ENCODE measurements at regions of chr17 and their contacts with region 1.

Region 1: DNA sequence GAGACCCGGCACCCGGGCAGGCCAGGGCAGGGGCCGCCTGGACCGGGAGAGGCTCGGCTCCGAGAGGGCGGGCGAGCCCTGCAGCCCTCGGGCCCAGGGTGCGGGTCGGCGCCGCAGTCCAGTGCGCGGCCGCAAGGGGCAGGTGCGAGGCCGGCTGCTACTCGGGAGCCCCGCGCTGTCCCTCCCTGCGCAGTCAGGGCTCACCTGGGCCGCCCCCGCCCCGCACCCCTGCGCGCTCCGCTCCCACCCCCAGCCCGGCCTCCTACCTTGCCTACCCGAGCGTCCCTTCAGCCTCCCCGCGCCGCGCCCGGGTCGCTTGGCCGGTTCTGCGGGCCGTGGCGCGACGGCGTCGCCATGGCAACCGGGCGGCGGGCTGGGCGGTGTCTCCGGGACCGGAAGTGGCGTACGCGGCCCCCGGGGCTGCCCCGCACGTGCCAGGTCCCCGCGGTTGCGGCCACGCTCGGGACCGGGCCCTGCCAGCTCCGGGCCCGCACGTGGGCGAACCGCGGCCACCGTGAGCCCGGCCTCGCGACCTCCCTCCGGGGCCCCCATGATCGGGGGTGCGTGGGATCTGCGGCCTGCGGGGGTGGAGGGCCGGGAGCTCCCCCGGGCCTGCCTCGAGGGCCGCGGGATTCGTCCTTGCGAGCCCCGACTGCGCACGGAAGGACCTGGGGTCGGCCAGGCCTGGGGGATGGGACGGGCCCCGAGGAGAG is at the start of gene CYB561:
- DNase-seq: peak; percentile 35 to 47
- ATAC-seq: peak; percentile 67 to 75
- H3K4me3 ChIP-seq: peak within 1 kb of the TSS; percentile 62 to 77 (median 72)
- H3K27ac ChIP-seq: peak within 1 kb of the TSS; percentile 68 to 83 (median 78)
- H3K4me1 ChIP-seq: peaks cover 19 to 25% of the 10 kb centered on the region in 2 donors
- H3K27me3 ChIP-seq: peaks cover 0 to 6% (median 2%) of the 10 kb centered on the region in 3 donors
- CTCF ChIP-seq: peak in 4 of 5 experiments; percentile 43 to 61 (median 53)
- POLR2A ChIP-seq: peak; percentile 33 to 35
- total RNA-seq, gene CYB561: 2.2 to 6.5 (median 3.9) TPM

Region 2: GRCh38 chr17:63275318-63275970 is 170.7 kb before region 1 on chr17:
- in situ Hi-C with region 1: no loop called
- intact Hi-C with region 1: no loop called
- DNase-seq: no peak
- ATAC-seq: no peak
- H3K4me3 ChIP-seq: no peak overlapping the region
- H3K27ac ChIP-seq: no peak overlapping the region
- H3K4me1 ChIP-seq: no peaks in the 10 kb centered on the region
- H3K27me3 ChIP-seq: no peaks in the 10 kb centered on the region
- CTCF ChIP-seq: no peak
- POLR2A ChIP-seq: no peak

Region 3: GRCh38 chr17:63356337-63356757 is 89.8 kb before region 1 on chr17:
- in situ Hi-C with region 1: loop called in 1 of 4 experiments (anchors 25 kb)
- intact Hi-C with region 1: no loop called
- DNase-seq: no peak
- ATAC-seq: peak; percentile 62 to 76
- H3K4me3 ChIP-seq: no peak overlapping the region
- H3K27ac ChIP-seq: no peak overlapping the region
- H3K4me1 ChIP-seq: no peaks in the 10 kb centered on the region
- H3K27me3 ChIP-seq: no peaks in the 10 kb centered on the region
- CTCF ChIP-seq: no peak
- POLR2A ChIP-seq: no peak

Region 4: DNA sequence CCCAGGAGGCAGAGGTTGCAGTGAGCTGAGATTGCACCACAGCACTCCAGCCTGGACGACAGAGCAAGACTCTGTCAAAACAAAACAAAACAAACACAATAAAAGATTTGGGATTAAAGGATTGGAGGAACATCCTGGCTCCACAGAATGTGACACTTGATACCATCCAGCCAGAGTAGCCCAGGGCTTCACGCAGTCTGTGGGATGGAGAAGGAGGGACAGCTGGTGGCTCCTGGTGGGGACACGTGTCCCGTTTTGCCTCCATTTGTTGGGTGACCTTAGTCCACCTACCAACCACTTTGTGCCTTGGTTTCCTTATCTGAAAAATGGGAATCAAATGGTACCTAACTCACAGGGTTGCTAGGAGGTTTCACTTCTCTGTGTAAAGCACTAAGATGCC is 12.3 kb after region 1 on chr17:
- in situ Hi-C with region 1: no loop called
- intact Hi-C with region 1: no loop called
- DNase-seq: no peak
- ATAC-seq: no peak
- H3K4me3 ChIP-seq: no peak overlapping the region
- H3K27ac ChIP-seq: no peak overlapping the region
- H3K4me1 ChIP-seq: no peaks in the 10 kb centered on the region
- H3K27me3 ChIP-seq: no peaks in the 10 kb centered on the region
- CTCF ChIP-seq: no peak
- POLR2A ChIP-seq: no peak

Region 5: DNA sequence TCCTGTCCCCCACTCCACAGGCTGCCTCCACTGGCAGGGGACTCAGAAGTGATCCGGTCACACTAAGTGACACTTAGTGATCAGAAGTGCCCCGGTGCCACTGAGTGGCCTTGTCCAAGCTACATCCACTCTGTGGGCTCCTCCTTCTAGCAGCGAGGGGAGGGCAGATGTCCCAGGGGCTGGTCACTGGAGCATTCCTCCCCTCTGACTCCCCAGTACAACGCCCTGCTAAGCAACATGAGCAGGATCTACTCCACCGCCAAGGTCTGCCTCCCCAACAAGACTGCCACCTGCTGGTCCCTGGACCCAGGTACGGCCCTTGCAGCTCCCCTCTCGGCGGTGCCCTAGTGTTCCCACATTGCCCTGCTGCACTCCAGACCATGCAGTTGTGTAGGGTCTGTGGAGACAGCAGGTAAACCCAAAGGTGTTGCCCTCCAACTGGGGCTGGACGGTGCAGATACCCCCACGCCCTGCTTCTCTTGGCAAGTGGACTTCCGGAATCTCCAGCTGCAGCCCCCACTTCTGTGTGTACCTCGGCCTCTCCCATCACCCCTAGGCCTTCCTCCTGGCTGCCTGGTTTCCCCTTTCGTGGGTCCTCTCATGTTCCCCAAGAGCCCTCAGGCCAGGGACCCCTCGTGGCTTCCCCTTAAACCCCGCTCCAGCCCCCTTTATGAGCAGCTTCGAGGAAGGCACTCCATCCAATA is 32.8 kb after region 1 on chr17:
- in situ Hi-C with region 1: no loop called
- intact Hi-C with region 1: loop called (anchors 5 kb)
- DNase-seq: peak; percentile 47 to 56
- ATAC-seq: peak; percentile 63 to 64
- H3K4me3 ChIP-seq: no peak overlapping the region
- H3K27ac ChIP-seq: no peak overlapping the region
- H3K4me1 ChIP-seq: peaks cover 5 to 15% of the 10 kb centered on the region in 2 donors
- H3K27me3 ChIP-seq: peaks cover 11 to 32% (median 18%) of the 10 kb centered on the region in 3 donors
- CTCF ChIP-seq: peak; percentile 39 to 67 (median 64)
- POLR2A ChIP-seq: no peak

Region 6: GRCh38 chr17:63697341-63698286 is 251.5 kb after region 1 on chr17:
- in situ Hi-C with region 1: loop called in 1 of 4 experiments (anchors 25 kb)
- intact Hi-C with region 1: no loop called
- DNase-seq: peak in 1 of 2 donors; percentile 52
- ATAC-seq: peak in 1 of 2 donors; percentile 47
- H3K4me3 ChIP-seq: no peak overlapping the region
- H3K27ac ChIP-seq: no peak overlapping the region
- H3K4me1 ChIP-seq: peaks cover 17 to 24% of the 10 kb centered on the region in 2 donors
- H3K27me3 ChIP-seq: peaks cover 5 to 20% (median 10%) of the 10 kb centered on the region in 3 donors
- CTCF ChIP-seq: peak in 4 of 5 experiments; percentile 29 to 62 (median 47)
- POLR2A ChIP-seq: no peak

Region 7: GRCh38 chr17:63827002-63827771 is 381.1 kb after region 1 on chr17 and contains the starts of genes FTSJ3 and PSMC5:
- in situ Hi-C with region 1: loop called in 1 of 4 experiments (anchors 25 kb)
- intact Hi-C with region 1: no loop called
- DNase-seq: peak; percentile 94 to 95
- ATAC-seq: peak; percentile 96 to 97
- H3K4me3 ChIP-seq: peak within 1 kb of the TSS; percentile 84 to 89 (median 86)
- H3K27ac ChIP-seq: peak within 1 kb of the TSS; percentile 92 to 95 (median 94)
- H3K4me1 ChIP-seq: peaks cover 25 to 33% of the 10 kb centered on the region in 2 donors
- H3K27me3 ChIP-seq: no peaks in the 10 kb centered on the region
- CTCF ChIP-seq: peak in 3 of 5 experiments; percentile 23 to 53 (median 31)
- POLR2A ChIP-seq: peak; percentile 78 to 91
- total RNA-seq, gene FTSJ3: 24.6 to 46.3 (median 34.9) TPM
- total RNA-seq, gene PSMC5: 103 to 153 (median 123) TPM

Measured in gastrocnemius medialis (tissue), 4 donors.